Cardiac septum (tissue), 1 donor: ENCODE measurements at regions of chr11 and their contacts with region 1.

Region 1: DNA sequence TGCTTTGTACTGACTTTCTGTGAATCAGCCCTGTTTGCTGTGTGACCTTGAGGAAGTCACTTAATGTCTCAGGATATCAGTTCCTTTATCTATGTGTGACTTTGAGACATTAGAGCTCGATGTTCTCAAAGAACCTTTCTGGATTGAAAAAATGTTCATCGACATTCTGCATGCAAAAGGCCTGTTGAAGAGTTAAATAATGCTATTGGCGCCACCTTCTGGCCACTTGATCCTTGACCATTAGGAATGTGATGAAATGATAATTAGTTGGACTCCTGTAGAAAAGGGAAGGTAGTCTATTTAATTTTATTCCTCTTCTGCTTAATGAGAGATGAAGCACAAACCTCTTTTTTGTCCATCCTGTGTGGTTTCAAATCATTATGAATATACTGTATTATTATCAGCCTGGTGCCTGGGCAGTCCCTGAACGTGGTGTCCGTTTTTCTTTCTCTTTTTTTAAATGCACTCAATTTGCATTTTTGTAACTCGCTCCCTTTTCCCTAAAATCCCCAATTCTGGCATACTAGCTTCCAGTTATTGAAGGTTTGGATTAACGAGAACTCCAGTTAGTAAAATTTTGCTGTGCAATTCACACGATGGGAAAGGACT is 20.7 kb downstream of the ELF5 start:
- DNase-seq: no peak

Region 2: DNA sequence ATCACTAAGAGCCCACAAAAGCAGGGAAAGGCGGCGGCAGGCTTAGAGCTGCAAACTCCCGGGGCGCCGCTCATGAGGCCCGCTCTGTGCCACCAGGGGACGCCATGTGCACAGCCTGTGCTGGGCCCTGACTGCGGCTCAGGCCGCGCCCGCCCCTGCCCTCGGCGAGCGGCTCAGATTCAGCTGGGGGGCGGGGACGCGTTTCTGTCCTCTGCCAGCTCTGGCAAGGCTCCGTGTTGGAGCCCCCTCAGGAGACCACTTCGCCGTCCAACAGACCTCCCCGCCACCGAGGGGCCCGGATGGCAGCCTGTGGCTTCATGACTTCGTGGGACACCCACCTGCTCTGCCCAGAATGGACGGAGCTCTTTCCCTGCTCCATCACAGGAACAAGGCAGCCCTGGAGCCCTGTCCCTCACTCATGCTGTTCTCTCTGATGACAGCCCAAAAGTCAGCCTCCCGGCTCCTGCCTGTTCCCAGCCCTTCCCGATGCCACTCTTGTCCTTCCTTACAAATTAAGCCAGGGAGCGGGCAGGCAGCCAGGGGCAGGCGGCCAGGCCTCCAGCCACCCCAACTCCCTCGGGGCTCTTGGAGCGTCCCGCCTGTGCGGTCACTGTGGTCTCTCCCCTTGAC is 318.4 kb before region 1 on chr11:
- intact Hi-C with region 1: loop called (anchors 10 kb)
- DNase-seq: peak; percentile 89

Region 3: GRCh38 chr11:34234086-34234740 is 258.7 kb before region 1 on chr11:
- intact Hi-C with region 1: no loop called
- DNase-seq: peak; percentile 51

Region 4: DNA sequence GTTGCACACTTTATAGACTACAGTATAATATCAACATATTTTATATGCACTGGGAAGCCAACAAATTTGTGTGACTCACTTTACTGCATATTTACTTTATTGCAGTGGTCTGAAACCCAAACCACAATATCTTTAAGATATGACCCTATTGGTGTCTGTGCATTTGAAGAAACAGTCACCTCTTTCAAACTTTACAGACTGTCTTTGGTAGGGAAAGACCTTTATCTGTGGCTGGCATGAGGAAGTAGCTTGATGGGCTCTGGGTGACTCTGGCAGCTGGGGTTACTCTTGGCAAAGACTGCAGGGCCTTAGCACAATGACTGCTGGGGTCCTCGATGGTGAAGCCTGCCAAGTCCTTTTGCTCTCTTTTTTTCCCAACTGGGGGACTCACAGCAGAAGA is 113.8 kb before region 1 on chr11:
- intact Hi-C with region 1: loop called (anchors 10 kb)
- DNase-seq: no peak